ENCODE measurements at regions of chr20 and their contacts with region 1.

Region 1: DNA sequence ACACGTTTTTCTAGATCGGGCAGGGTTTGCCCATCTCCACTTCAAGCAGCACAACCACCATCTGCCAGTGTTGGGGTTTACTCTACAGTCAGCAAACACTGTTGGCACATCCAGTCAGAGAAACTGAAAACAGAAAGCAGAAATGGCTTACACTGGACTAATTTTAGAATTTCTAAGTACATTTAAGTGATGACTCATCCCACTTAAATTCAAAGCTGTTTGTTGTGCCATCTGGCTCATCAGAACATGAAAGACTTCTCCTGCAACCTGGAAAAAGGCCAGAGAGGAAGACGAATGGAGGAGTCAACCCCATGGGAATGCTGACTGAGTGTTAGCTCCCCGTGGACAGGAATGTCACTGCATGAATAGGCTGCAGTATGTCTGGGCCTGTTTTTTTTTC is 21.8 kb downstream of the FAM209B start:
- DNase-seq: peak in 1 of 2 donors; percentile 81
- ATAC-seq: peak; percentile 76 to 95 (median 90)
- H3K4me3 ChIP-seq: no peak overlapping the region
- H3K27ac ChIP-seq: peak overlapping the region in 6 of 10 donors; percentile 1 to 58 (median 30)
- H3K4me1 ChIP-seq: peaks cover 0 to 27% (median 15%) of the 10 kb centered on the region in 9 donors
- H3K27me3 ChIP-seq: no peaks in the 10 kb centered on the region
- CTCF ChIP-seq: peak in 2 of 9 donors; percentile 12 to 18

Region 2: GRCh38 chr20:56392282-56393137 is 162.4 kb before region 1 on chr20 and contains the start of gene CSTF1:
- intact Hi-C with region 1: loop called in 1 of 10 experiments (anchors 10 kb)
- DNase-seq: peak; percentile 99 to 100
- ATAC-seq: peak; percentile 97 to 100 (median 98)
- H3K4me3 ChIP-seq: peak within 1 kb of the TSS; percentile 57 to 94 (median 80)
- H3K27ac ChIP-seq: peak within 1 kb of the TSS; percentile 1 to 93 (median 84)
- H3K4me1 ChIP-seq: peaks cover 2 to 31% (median 23%) of the 10 kb centered on the region in 9 donors
- H3K27me3 ChIP-seq: no peaks in the 10 kb centered on the region
- CTCF ChIP-seq: no peak
- total RNA-seq, gene CSTF1: 16.3 to 23.7 (median 21.6) TPM

Region 3: DNA sequence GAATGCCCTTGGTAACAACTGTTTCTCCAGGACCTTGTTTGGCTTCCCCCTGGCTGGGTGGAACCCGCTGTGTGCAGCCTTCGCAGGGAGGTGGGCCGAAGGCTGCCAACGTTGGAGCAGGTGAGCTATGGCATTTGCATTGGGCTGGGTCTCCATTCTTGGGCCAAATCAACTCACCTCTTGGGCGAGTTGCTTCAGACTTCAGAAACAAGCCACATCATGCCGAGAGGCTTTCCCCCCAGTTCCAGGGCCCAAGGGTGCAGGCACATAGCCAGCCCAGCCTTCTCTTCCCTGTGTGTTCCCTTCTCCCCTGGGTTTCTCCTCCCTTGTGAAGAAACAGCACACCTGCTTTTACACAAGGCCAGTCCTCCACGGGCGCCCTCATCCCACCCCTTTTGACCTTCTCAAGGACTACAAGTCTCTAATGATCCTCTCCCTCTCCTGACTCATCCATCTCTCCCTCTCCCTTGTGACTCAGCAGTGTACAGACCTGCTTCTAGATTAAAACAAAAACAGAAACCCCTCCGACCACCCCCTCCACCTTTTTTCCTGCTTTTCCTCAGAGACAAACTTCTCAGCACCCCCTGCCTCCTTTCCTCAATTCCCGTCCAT is 19.8 kb after region 1 on chr20:
- intact Hi-C with region 1: loop called in 4 of 10 experiments (anchors 1 to 2 kb)
- DNase-seq: no peak
- ATAC-seq: peak in 1 of 8 donors; percentile 35
- H3K4me3 ChIP-seq: no peak overlapping the region
- H3K27ac ChIP-seq: no peak overlapping the region
- H3K4me1 ChIP-seq: no peaks in the 10 kb centered on the region
- H3K27me3 ChIP-seq: peaks cover 0 to 5% (median 0%) of the 10 kb centered on the region in 7 donors
- CTCF ChIP-seq: no peak

Region 4: GRCh38 chr20:56974499-56975236 is 419.8 kb after region 1 on chr20:
- intact Hi-C with region 1: loop called in 1 of 10 experiments (anchors 5 kb)
- DNase-seq: no peak
- ATAC-seq: no peak
- H3K4me3 ChIP-seq: no peak overlapping the region
- H3K27ac ChIP-seq: no peak overlapping the region
- H3K4me1 ChIP-seq: no peaks in the 10 kb centered on the region
- H3K27me3 ChIP-seq: peaks cover 0 to 89% (median 82%) of the 10 kb centered on the region in 7 donors
- CTCF ChIP-seq: peak in 7 of 9 donors; percentile 21 to 50 (median 37)

Region 5: DNA sequence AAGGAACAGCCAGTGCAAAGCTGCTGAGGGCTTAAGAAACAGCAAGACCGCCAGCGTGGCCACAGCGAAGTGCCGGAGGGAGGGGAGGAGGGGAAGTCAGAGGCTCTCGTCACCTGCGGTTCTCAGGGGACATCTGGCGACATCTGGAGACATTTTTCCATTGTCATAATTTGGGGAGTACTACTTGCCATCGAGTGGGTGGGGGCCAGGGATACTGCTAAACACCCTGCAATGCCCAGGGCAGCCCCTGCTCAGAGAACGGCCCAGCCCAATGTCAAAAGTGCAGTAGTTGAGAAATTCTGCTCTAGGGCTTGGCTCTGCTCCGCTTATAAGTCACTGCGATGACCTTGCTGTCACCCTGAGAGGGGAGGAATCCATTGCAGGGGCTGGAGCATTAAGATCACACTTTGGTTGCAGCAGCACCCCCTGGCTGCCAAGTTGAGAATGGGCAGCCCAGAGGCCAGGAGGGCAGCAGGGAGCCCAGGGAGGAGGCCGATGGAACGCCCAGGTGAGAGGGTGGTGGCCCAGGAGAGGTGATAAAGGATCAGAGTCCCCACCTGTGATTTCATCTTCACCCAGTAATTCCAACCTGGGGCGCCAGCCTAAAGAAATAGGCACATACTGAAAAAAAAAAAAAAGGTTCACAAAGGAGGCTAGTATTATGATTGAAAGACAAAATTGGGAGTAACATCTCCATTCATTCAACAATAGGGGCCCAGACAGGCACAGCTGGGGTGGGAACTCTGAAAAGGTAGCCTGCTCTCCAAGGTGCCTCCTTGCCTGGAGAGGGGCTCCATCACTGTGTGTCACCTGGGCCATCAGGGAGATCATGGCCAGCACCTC is 493.4 kb after region 1 on chr20:
- intact Hi-C with region 1: loop called in 1 of 10 experiments (anchors 5 kb)
- DNase-seq: no peak
- ATAC-seq: no peak
- H3K4me3 ChIP-seq: no peak overlapping the region
- H3K27ac ChIP-seq: no peak overlapping the region
- H3K4me1 ChIP-seq: no peaks in the 10 kb centered on the region
- H3K27me3 ChIP-seq: peaks cover 0 to 30% (median 7%) of the 10 kb centered on the region in 7 donors
- CTCF ChIP-seq: peak in 8 of 9 donors; percentile 8 to 53 (median 36)

Region 6: DNA sequence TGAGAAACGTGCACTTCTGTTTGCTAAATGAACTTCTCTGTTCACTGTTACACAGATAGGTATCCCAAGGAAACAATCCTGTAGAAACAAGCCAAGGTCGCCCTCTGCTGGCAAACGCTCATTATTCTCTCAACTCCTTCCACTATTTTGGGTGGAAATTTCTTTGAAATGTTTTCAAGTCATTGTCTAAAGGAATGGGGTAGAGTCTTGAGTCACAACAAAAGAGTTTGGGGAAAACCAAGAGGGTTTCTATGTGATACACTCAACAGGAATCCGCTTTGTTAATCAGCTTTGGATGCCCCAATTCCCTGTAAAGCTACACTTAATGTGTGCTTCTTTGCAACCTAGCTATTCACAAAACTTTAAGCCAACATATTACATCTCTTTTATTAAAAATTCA is 791.6 kb after region 1 on chr20:
- intact Hi-C with region 1: loop called in 5 of 10 experiments (anchors 5 to 10 kb)
- DNase-seq: peak; percentile 62 to 69
- ATAC-seq: peak in 5 of 8 donors; percentile 44 to 59 (median 49)
- H3K4me3 ChIP-seq: no peak overlapping the region
- H3K27ac ChIP-seq: no peak overlapping the region
- H3K4me1 ChIP-seq: peaks cover 0 to 3% (median 0%) of the 10 kb centered on the region in 9 donors
- H3K27me3 ChIP-seq: peaks cover 0 to 44% (median 4%) of the 10 kb centered on the region in 7 donors
- CTCF ChIP-seq: peak; percentile 46 to 83 (median 79)

Measured in heart right ventricle (tissue), 16 donors.